ENCODE measurements at regions of chr14 and their contacts with region 1.

Region 1: DNA sequence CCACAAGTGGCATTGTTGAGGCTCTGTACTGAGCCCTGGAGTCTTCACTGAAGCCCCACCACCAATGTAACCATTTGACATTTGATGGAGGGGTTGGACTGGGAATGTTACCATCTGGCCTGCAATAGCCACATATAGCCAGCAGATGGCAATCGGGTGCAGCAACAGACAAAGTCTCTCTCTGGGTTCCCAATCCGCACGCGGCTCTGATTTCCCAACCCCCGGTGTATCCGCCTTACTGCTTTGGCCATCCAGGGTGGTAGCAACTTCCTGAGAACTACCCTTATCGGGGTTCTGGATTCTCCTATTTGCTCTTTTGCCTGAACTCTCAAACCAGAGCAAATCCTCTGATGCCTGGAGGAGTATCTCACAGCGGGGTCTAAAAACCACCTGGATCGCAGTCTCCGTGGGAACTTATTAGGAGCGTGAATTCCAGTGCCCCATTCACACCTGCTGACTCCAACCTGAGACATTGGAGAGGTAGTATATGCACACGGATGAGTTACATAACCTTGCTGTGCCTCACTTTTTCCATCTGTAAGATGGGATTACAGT is 14.2 kb downstream of the VRTN start:
- DNase-seq: peak; percentile 34
- H3K4me3 Mint-ChIP-seq: no peak overlapping the region
- H3K27ac Mint-ChIP-seq: no peak overlapping the region
- H3K4me1 Mint-ChIP-seq: no peaks in the 10 kb centered on the region
- H3K27me3 Mint-ChIP-seq: peaks cover 15% of the 10 kb centered on the region

Region 2: GRCh38 chr14:74804219-74804826 is 441.9 kb after region 1 on chr14:
- intact Hi-C with region 1: loop called (anchors 5 kb)
- DNase-seq: peak; percentile 11
- H3K4me3 Mint-ChIP-seq: no peak overlapping the region
- H3K27ac Mint-ChIP-seq: no peak overlapping the region
- H3K4me1 Mint-ChIP-seq: no peaks in the 10 kb centered on the region
- H3K27me3 Mint-ChIP-seq: no peaks in the 10 kb centered on the region

Measured in activated T-helper 1 cell treated with anti-CD3 and anti-CD28 coated beads, Interleukin-12 subunit alpha, Interleukin-12 subunit beta, Interleukin-2, Interleukin-4 antibody, amounts not matched to agents 30 ng/mL and 10 ng/mL and 1 ng/mL, durations not matched to agents 14 hours and 24 hours and 36 hours (primary cell).